ENCODE measurements at regions of chr19 and their contacts with region 1.

Region 1: GRCh38 chr19:46392243-46392801 is 21.0 kb downstream of the CCDC8 start:
- DNase-seq: no peak
- H3K4me3 ChIP-seq: no peak overlapping the region
- H3K27ac ChIP-seq: no peak overlapping the region; the same call in 1 of the 2 replicates
- H3K4me1 ChIP-seq: no peaks in the 10 kb centered on the region; a peak in 2 of 7 replicates
- H3K27me3 ChIP-seq: no peaks in the 10 kb centered on the region
- CTCF ChIP-seq: no peak
- EP300 ChIP-seq: no peak
- POLR2A ChIP-seq: no peak
- RAD21 ChIP-seq: no peak

Region 2: GRCh38 chr19:46283771-46284170 is 108.6 kb before region 1 on chr19:
- CTCF ChIA-PET with region 1: interaction called, 15 read pairs
- POLR2A ChIA-PET with region 1: interaction called, 4 read pairs
- DNase-seq: no peak
- H3K4me3 ChIP-seq: no peak overlapping the region
- H3K27ac ChIP-seq: no peak overlapping the region
- H3K4me1 ChIP-seq: peaks cover 0 to 3% (median 3%) of the 10 kb centered on the region in 4 experiments; a peak in 5 of 7 replicates
- H3K27me3 ChIP-seq: no peaks in the 10 kb centered on the region
- CTCF ChIP-seq: no peak
- EP300 ChIP-seq: no peak
- POLR2A ChIP-seq: no peak
- RAD21 ChIP-seq: no peak

Region 3: DNA sequence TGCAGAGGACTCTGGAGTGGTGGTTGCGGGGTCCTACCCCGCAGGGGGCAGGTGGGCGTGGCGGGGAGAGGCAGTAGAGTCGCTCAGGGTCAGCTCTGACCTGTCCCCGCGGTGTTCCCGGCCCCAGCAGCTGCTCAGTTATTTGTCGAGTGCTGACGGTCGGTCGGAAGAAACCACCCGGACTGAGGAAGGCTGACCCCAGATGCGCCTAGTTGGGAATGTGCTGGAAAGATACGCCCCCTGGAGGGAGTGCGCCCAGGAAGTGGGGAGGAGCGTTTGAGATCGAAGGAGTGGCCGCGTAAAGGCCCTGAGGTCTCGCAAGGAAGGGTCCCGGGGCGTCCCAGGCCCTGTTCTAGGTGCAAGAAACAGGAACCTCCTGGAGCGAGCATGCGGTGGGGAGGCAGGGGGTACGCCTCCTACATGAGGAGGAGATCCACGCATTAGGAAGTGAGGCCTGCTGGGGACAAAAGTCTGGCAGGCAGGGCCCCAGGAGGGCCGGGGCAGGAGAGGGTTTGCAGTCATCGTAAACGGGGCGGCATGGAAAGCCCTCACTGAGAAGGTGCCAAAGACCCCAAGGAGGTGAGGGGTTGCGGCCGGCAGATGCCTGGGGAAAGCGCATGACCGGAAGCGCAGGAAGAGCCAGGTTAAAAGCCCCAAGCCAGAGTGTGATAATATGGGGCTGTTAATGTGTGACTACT is 11.9 kb after region 1 on chr19:
- CTCF ChIA-PET with region 1: interaction called, 15 read pairs
- POLR2A ChIA-PET with region 1: interaction called, 6 read pairs
- DNase-seq: peak in 1 of 2 experiments; percentile 83
- H3K4me3 ChIP-seq: peak overlapping the region; percentile 18 to 57 (median 40)
- H3K27ac ChIP-seq: no peak overlapping the region
- H3K4me1 ChIP-seq: peaks cover 0 to 27% (median 18%) of the 10 kb centered on the region in 4 experiments; a peak in 5 of 7 replicates
- H3K27me3 ChIP-seq: peaks cover 0 to 34% (median 19%) of the 10 kb centered on the region in 4 experiments; a peak in 6 of 7 replicates
- CTCF ChIP-seq: peak in 1 of 3 experiments; percentile 6; a peak in 1 of 4 replicates
- EP300 ChIP-seq: no peak
- POLR2A ChIP-seq: no peak
- RAD21 ChIP-seq: no peak

Region 4: DNA sequence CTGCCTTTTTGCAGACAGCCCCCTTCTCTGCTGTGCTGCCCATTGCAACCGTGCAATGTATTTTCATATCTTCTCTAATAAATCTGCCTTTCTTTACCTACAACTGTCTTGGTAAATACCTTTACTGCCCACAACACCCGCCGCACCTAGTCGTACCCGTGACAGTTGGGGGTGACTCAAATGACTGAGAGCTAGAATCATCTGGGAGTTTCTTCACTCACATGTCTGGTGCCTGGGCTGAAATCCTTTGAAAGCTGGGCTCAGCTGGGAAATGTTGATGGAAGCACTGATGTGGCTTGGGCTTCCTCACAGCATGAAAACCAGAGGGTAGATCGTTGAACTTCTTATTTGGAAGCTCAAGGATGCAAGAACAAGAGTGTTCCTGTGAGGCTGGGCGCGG is 81.9 kb after region 1 on chr19:
- CTCF ChIA-PET with region 1: interaction called, 16 read pairs
- POLR2A ChIA-PET with region 1: no interaction called
- DNase-seq: no peak
- H3K4me3 ChIP-seq: no peak overlapping the region
- H3K27ac ChIP-seq: no peak overlapping the region
- H3K4me1 ChIP-seq: peaks cover 0 to 12% (median 7%) of the 10 kb centered on the region in 4 experiments; a peak in 6 of 7 replicates
- H3K27me3 ChIP-seq: peaks cover 0 to 7% (median 0%) of the 10 kb centered on the region in 4 experiments; a peak in 3 of 7 replicates
- CTCF ChIP-seq: no peak
- EP300 ChIP-seq: no peak
- POLR2A ChIP-seq: no peak
- RAD21 ChIP-seq: no peak

Region 5: GRCh38 chr19:46495787-46496101 is 103.4 kb after region 1 on chr19 and contains the start of gene PNMA8B:
- CTCF ChIA-PET with region 1: interaction called, 254 read pairs
- POLR2A ChIA-PET with region 1: interaction called, 4 read pairs
- DNase-seq: peak; percentile 78 to 94
- H3K4me3 ChIP-seq: peak within 1 kb of the TSS; percentile 23 to 59 (median 36); a peak in 6 of 8 replicates
- H3K27ac ChIP-seq: no peak within 1 kb of the TSS
- H3K4me1 ChIP-seq: peaks cover 5 to 24% (median 20%) of the 10 kb centered on the region in 4 experiments
- H3K27me3 ChIP-seq: peaks cover 17 to 49% (median 46%) of the 10 kb centered on the region in 4 experiments
- CTCF ChIP-seq: no peak
- EP300 ChIP-seq: no peak
- POLR2A ChIP-seq: no peak
- RAD21 ChIP-seq: 0 out of 4 replicates have a peak, but pooled peaks of 1 of the 2 experiments have one; percentile 7
- total RNA-seq, gene PNMA8B: 1.2 and 1.4 TPM in 2 replicates

Region 6: GRCh38 chr19:46513461-46514236 is 121.3 kb after region 1 on chr19:
- CTCF ChIA-PET with region 1: interaction called, 91 read pairs
- POLR2A ChIA-PET with region 1: no interaction called
- DNase-seq: peak; percentile 65 to 99
- H3K4me3 ChIP-seq: no peak overlapping the region
- H3K27ac ChIP-seq: no peak overlapping the region
- H3K4me1 ChIP-seq: no peaks in the 10 kb centered on the region
- H3K27me3 ChIP-seq: no peaks in the 10 kb centered on the region
- CTCF ChIP-seq: peak; percentile 87 to 98 (median 91)
- EP300 ChIP-seq: no peak
- POLR2A ChIP-seq: no peak
- RAD21 ChIP-seq: peak; percentile 97 to 99

Measured in H1 (cell line).